PC-9 (cell line): ENCODE measurements at regions of chr4 and their contacts with region 1.

Region 1: DNA sequence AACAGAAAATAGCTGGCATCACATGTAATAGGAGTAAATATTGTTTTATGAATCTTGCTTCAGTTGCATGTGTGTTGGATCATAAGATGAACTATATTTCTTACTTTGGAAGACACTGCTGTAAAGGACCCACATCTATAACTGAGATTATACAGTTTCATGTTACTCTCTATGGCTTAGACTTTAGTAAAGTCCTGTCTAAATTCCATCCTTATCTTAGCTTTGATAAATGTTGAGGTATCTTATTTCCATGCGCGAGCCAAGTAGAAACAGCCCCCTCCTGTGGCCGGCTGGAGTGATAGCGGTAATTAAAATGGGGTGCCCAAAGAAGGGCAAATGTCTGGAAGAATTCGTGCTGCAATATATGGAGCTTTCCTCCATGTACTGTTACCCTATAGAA is 43.0 kb downstream of the CCDC158 start:
- DNase-seq: peak; percentile 43 to 44
- H3K4me3 ChIP-seq: no peak overlapping the region
- H3K27ac ChIP-seq: no peak overlapping the region
- H3K4me1 ChIP-seq: peaks cover 11% of the 10 kb centered on the region
- H3K27me3 ChIP-seq: no peaks in the 10 kb centered on the region
- CTCF ChIP-seq: peak; percentile 78

Region 2: GRCh38 chr4:76125816-76126215 is 252.1 kb before region 1 on chr4:
- CTCF ChIA-PET with region 1: interaction called, 18 read pairs
- POLR2A ChIA-PET with region 1: no interaction called
- intact Hi-C with region 1: no loop called
- DNase-seq: no peak
- H3K4me3 ChIP-seq: no peak overlapping the region
- H3K27ac ChIP-seq: no peak overlapping the region
- H3K4me1 ChIP-seq: no peaks in the 10 kb centered on the region
- H3K27me3 ChIP-seq: no peaks in the 10 kb centered on the region
- CTCF ChIP-seq: no peak

Region 3: GRCh38 chr4:76179398-76180318 is 198.3 kb before region 1 on chr4:
- CTCF ChIA-PET with region 1: interaction called, 23 read pairs
- POLR2A ChIA-PET with region 1: no interaction called
- intact Hi-C with region 1: loop called (anchors 1 kb)
- DNase-seq: peak in 1 of 2 experiments; percentile 64
- H3K4me3 ChIP-seq: no peak overlapping the region
- H3K27ac ChIP-seq: no peak overlapping the region
- H3K4me1 ChIP-seq: no peaks in the 10 kb centered on the region
- H3K27me3 ChIP-seq: no peaks in the 10 kb centered on the region
- CTCF ChIP-seq: peak; percentile 87

Region 4: DNA sequence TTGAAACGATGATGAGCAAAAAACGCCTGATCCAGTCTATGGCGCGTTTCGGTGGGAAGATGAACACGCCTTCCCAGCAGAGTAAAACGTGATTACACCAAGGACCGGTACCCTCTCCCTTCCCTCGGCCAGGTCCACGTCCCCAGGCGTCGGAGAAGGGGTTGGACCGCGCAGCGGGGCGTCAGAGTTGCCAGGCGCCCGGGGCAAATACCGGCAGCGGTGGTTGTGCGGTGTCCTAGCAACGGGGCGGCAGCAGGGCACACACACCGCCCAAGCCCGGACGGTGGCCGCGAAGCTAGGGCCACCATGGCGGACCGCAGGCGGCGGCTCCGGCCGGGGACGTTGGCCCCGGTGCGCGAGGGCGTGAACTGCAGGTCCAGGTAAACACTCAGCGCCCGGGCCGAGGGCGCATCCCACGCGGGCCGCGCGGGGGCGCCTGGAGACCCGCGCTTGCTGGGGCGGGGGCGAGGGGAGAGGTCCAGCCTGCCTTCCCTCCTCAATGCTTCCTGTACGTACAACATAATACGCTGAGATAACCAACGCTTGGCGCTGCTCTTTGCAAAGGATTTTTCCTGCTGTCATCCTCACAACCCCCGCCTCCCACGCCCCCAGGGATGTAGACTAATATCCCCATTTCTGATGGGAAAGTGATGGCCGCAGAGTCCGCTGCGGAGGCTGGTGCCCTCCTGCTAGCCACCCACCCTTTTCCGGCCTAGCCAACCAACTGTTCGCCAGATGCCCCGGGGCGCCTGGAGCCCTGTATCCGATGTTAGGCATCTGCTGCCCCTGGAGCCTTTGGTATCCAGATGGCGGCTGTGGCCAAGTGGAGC is 126.3 kb before region 1 on chr4 and contains the start of gene FAM47E:
- CTCF ChIA-PET with region 1: interaction called, 4 read pairs
- POLR2A ChIA-PET with region 1: no interaction called
- intact Hi-C with region 1: loop called (anchors 2 kb)
- DNase-seq: peak; percentile 67 to 86
- H3K4me3 ChIP-seq: peak within 1 kb of the TSS; percentile 73
- H3K27ac ChIP-seq: no peak within 1 kb of the TSS
- H3K4me1 ChIP-seq: peaks cover 5% of the 10 kb centered on the region; the same call in 1 of the 2 replicates
- H3K27me3 ChIP-seq: no peaks in the 10 kb centered on the region
- CTCF ChIP-seq: peak; percentile 53
- total RNA-seq, gene FAM47E: 2.2 and 2.5 TPM in 2 replicates

Region 5: GRCh38 chr4:76266627-76267026 is 111.3 kb before region 1 on chr4:
- CTCF ChIA-PET with region 1: no interaction called
- POLR2A ChIA-PET with region 1: no interaction called
- intact Hi-C with region 1: no loop called
- DNase-seq: no peak
- H3K4me3 ChIP-seq: no peak overlapping the region
- H3K27ac ChIP-seq: no peak overlapping the region
- H3K4me1 ChIP-seq: no peaks in the 10 kb centered on the region
- H3K27me3 ChIP-seq: no peaks in the 10 kb centered on the region
- CTCF ChIP-seq: no peak

Region 6: DNA sequence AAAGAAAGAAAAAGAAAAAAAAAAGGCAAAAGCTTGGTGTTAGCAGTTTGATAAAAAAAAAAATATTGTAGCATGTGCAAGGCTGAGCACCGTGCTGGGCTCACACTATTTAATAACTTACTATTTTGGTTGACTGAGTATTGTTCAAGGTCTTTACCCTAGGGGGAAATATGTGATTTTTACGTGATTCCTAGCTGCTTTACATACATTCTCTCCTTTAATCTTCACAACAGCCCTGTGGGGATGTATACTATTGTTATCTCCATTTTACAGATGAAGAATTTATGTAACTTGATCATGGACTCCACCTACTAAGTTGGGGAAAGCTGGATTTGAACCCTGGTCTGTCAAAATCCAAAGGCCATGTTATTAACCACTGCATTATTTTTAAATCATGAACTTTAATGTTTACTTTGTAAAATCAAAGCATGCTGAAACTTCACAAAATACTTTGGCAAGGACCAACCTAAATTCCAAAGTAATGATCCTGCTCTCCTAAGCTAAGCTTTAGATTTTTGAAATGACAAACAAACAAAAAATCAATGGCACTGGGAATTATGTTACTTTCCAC is 100.3 kb before region 1 on chr4:
- CTCF ChIA-PET with region 1: interaction called, 13 read pairs
- POLR2A ChIA-PET with region 1: no interaction called
- intact Hi-C with region 1: no loop called
- DNase-seq: no peak
- H3K4me3 ChIP-seq: no peak overlapping the region
- H3K27ac ChIP-seq: no peak overlapping the region
- H3K4me1 ChIP-seq: no peaks in the 10 kb centered on the region
- H3K27me3 ChIP-seq: no peaks in the 10 kb centered on the region
- CTCF ChIP-seq: no peak

Region 7: DNA sequence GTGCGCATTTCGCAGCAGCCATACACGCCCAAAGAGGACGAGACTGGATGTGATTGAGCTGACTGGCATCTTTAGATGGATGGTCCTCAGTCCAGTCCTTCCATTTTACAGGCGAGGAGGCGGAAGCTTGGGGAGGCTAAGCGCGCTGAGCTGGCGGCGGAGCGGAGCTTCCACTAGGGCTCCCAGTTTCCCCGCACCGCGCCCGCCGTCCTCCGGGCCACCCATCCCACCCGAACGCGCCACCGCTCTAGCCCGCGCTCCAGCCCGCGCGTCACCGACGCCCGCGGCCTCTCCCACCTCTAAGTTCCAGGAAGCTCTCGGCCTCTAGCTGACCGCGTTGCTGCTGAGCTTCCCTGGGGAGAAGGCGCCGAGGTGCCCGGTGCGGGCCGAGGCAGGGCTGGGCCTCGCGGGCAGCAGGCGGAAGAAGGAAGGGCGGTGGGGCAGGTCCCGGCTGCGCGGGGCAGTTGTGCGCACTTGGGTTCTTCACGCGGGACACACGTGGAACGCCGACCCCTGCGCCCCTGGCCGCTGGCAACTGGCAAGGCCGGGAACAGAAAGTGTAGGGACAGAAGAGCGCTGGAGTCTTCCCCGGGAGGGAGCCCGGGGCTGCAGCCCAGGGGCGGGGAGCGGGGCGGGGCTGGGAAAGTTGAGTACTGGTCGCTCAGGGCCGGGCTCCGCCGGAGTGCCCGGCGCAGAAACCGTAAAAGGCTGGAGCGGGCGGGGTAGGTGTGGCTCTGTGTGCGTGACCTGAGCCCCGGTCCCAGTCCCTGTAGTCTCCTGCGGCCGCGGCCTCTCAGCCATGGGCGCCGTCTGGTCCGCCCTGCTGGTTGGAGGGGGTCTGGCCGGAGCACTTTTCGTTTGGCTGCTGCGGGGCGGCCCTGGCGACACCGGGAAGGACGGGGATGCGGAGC is 71.7 kb before region 1 on chr4 and contains the start of gene STBD1:
- CTCF ChIA-PET with region 1: interaction called, 3 read pairs
- POLR2A ChIA-PET with region 1: no interaction called
- intact Hi-C with region 1: loop called (anchors 2 kb)
- DNase-seq: peak; percentile 54 to 73
- H3K4me3 ChIP-seq: peak within 1 kb of the TSS; percentile 87
- H3K27ac ChIP-seq: peak within 1 kb of the TSS; percentile 58
- H3K4me1 ChIP-seq: peaks cover 20% of the 10 kb centered on the region
- H3K27me3 ChIP-seq: no peaks in the 10 kb centered on the region
- CTCF ChIP-seq: no peak
- total RNA-seq, gene STBD1: 1.8 and 3.5 TPM in 2 replicates